Activated B cell treated with CpG ODN at 0.5 μM for 24 hours (primary cell): ENCODE measurements at regions of chr9 and their contacts with region 1.

Region 1: DNA sequence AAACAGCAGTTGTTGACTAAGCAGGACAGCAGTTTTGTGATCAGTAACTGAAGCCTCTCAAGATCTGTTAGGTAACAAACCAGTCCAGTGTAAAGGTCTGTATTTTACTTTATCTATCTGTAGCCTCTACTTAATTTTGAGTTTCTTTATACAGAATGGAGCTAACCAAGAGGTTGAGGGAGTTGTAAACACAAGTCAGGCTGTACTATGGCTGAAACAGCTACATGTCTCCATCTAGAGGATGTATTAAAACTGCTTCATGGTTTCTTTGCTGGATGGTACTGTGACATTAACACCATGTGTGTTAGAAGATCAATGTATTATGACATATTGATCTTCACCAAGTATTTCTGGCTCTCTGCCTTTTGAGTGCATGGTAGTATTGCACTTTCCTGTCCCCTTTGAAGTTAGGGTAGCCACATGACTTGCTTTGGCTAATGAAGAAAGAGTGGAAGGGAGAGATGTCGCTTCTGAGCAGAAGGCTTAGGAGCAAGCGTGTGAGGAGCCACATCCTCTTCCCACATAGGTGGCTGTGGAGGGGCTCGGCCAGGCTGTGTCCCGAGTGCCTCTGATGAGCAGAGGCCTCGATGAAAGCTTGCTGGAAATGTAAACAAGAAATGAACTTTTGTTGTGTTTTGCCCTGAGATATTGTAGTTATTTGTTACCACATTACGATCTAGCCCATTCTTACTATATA is 105.6 kb upstream of the PCA3 start:
- DNase-seq: no peak
- ATAC-seq: peak; percentile 94
- H3K4me3 Mint-ChIP-seq: no peak overlapping the region
- H3K27ac Mint-ChIP-seq: no peak overlapping the region
- H3K4me1 Mint-ChIP-seq: peaks cover 41% of the 10 kb centered on the region
- H3K27me3 Mint-ChIP-seq: peaks cover 3% of the 10 kb centered on the region
- CTCF ChIP-seq: peak; percentile 19

Region 2: DNA sequence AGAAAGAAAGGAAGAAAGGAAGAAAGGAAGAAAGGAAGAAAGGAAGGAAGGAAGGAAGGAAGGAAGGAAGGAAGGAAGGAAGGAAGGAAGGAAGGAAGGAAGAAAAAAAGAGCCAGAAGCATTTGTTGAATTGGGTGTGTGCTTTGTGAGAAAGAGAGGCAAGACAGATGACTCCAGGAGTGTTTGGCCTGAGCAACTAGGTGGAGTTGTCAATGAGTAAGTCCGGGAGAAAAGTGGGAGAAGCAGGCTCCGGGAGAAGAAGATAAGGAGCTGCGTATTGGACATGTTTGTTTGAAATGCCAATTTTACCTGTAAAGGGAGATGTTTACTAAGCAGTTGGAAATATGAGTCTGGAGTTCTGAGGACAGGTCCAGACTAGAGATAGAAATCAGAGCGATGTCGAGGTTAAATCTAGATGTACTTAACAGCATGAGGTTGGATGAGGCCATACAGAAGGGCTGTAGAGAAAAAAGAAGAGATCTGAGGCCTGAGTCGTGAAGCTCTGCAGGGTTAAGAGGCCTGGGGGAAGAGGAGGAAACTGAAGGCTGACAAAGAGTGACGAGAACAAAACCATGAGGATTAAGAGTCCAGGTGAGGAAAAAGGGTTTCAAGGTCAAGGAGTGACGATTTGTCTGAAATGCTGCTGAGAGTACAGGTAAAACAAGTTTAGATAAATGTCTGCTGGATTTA is 214.6 kb before region 1 on chr9:
- CTCF ChIA-PET with region 1: interaction called, 76 read pairs
- POLR2A ChIA-PET with region 1: no interaction called
- intact Hi-C with region 1: loop called (anchors 1 kb)
- DNase-seq: no peak
- ATAC-seq: no peak
- H3K4me3 Mint-ChIP-seq: no peak overlapping the region
- H3K27ac Mint-ChIP-seq: no peak overlapping the region
- H3K4me1 Mint-ChIP-seq: peaks cover 3% of the 10 kb centered on the region
- H3K27me3 Mint-ChIP-seq: no peaks in the 10 kb centered on the region
- CTCF ChIP-seq: no peak

Region 3: DNA sequence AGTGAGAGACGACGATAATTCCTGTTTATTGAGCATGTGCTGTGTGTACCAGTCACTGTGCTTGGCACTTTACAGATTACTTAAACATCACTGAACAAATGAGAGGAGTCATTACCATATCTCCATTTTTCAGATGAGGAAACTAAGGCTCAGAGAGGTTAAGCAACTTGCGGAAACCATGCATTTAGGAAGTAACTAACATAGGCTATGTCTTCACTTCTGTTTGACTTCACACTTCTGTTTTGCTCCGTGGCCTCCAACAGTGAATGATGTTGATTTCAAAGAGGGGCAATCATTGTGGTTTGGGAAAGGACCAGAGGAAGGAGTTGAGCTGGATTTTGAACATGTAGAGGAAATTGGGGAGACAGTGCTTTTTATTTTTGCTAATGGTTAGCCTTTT is 183.0 kb before region 1 on chr9:
- CTCF ChIA-PET with region 1: interaction called, 4 read pairs
- POLR2A ChIA-PET with region 1: no interaction called
- intact Hi-C with region 1: loop called (anchors 1 kb)
- DNase-seq: no peak
- ATAC-seq: no peak
- H3K4me3 Mint-ChIP-seq: no peak overlapping the region
- H3K27ac Mint-ChIP-seq: no peak overlapping the region
- H3K4me1 Mint-ChIP-seq: peaks cover 67% of the 10 kb centered on the region
- H3K27me3 Mint-ChIP-seq: peaks cover 5% of the 10 kb centered on the region
- CTCF ChIP-seq: no peak

Region 4: GRCh38 chr9:76576344-76576743 is 82.3 kb before region 1 on chr9:
- CTCF ChIA-PET with region 1: no interaction called
- POLR2A ChIA-PET with region 1: no interaction called
- intact Hi-C with region 1: loop called (anchors 5 kb)
- DNase-seq: peak; percentile 22
- ATAC-seq: peak; percentile 91
- H3K4me3 Mint-ChIP-seq: peak overlapping the region; percentile 9
- H3K27ac Mint-ChIP-seq: peak overlapping the region; percentile 76
- H3K4me1 Mint-ChIP-seq: peaks cover 46% of the 10 kb centered on the region
- H3K27me3 Mint-ChIP-seq: peaks cover 2% of the 10 kb centered on the region
- CTCF ChIP-seq: no peak

Region 5: GRCh38 chr9:76687861-76688391 is 29.2 kb after region 1 on chr9:
- CTCF ChIA-PET with region 1: no interaction called
- POLR2A ChIA-PET with region 1: no interaction called
- intact Hi-C with region 1: no loop called
- DNase-seq: no peak
- ATAC-seq: no peak
- H3K4me3 Mint-ChIP-seq: no peak overlapping the region
- H3K27ac Mint-ChIP-seq: no peak overlapping the region
- H3K4me1 Mint-ChIP-seq: peaks cover 6% of the 10 kb centered on the region
- H3K27me3 Mint-ChIP-seq: peaks cover 25% of the 10 kb centered on the region
- CTCF ChIP-seq: no peak

Region 6: DNA sequence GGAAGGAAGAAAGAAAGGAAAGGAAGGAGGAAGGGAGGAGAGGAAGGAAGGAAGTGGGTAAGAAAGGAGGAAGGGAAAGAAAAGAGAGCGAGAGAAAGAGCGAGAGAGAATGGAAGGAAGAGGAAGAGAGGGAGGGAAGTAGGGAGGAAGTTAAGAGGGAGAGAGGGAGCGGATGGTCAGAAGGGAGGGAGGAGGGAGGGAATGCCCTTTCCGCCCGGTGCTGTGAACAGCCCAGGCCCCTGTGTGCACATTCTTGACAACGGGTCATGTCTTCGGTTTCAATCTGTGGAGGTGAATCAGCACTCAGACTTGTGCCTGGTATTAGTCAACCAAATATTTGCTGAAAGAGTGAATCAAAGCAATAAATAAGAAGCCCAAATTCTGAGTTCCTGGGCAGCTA is 208.0 kb after region 1 on chr9:
- CTCF ChIA-PET with region 1: no interaction called
- POLR2A ChIA-PET with region 1: no interaction called
- intact Hi-C with region 1: no loop called
- DNase-seq: no peak
- ATAC-seq: no peak
- H3K4me3 Mint-ChIP-seq: no peak overlapping the region
- H3K27ac Mint-ChIP-seq: no peak overlapping the region
- H3K4me1 Mint-ChIP-seq: no peaks in the 10 kb centered on the region
- H3K27me3 Mint-ChIP-seq: peaks cover 10% of the 10 kb centered on the region
- CTCF ChIP-seq: no peak

Region 7: GRCh38 chr9:76987594-76988200 is 329.0 kb after region 1 on chr9:
- CTCF ChIA-PET with region 1: no interaction called
- POLR2A ChIA-PET with region 1: no interaction called
- intact Hi-C with region 1: loop called (anchors 10 kb)
- DNase-seq: no peak
- ATAC-seq: no peak
- H3K4me3 Mint-ChIP-seq: no peak overlapping the region
- H3K27ac Mint-ChIP-seq: no peak overlapping the region
- H3K4me1 Mint-ChIP-seq: no peaks in the 10 kb centered on the region
- H3K27me3 Mint-ChIP-seq: peaks cover 12% of the 10 kb centered on the region
- CTCF ChIP-seq: no peak